ENCODE measurements at regions of chrX and their contacts with region 1.

Region 1: DNA sequence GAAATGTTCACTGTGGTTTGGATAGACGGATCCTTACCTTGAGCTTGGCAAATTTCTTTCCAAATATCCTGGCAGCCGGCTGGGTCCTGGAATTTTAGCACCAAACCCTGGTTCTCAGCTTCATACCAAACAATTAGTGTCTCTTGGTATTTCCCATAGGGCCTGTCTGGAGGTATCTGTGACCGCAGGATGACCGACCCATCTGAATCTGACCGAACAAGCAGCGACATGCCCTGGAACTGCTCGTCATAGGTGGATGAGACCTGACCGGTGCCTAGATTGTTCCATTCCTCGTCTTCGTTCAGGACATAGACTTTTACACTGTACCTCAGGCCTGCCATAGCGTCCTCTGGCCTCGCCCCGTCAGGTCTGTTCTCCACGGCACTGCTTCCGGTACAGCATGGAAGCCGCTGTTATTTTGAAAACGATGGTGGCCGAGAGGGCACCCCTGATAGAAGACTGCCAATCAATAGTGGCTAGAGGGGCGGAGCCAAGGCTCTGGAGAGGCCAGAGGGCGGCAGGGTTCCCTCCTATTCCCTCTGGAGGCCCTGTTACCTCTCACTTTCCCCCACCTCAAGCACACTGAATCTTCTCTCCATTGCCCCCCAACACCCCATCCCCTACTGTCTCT is at the start of gene PPP4R3C:
- DNase-seq: no peak
- H3K4me3 ChIP-seq: no peak within 1 kb of the TSS
- H3K27ac ChIP-seq: no peak within 1 kb of the TSS
- H3K4me1 ChIP-seq: no peaks in the 10 kb centered on the region
- H3K27me3 ChIP-seq: no peaks in the 10 kb centered on the region
- CTCF ChIP-seq: no peak
- total RNA-seq, gene PPP4R3C: not detected

Region 2: DNA sequence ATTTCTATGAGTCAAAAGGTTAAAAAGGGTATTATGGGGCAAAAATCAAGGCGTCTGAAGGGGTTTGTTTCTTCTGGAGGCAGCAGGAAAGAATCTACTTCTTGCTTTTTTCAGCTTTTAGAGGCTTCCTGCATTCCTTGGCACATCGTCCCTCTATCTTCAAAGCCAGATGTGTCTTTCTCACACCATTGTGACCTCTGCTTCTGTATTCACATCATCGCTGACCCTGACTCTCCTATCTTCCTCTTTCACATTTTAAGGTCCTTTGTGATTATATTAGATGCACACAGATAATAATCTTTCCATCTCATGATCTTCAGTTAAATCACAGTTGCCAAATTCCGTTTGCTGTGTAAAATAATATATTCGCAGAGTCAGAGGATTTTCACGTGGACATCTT is 112.6 kb before region 1 on chrX:
- CTCF ChIA-PET with region 1: no interaction called
- dilution Hi-C with region 1: no loop called
- in situ Hi-C with region 1: loop called in 1 of 2 experiments (anchors 25 kb)
- intact Hi-C with region 1: no loop called
- DNase-seq: no peak
- H3K4me3 ChIP-seq: no peak overlapping the region
- H3K27ac ChIP-seq: no peak overlapping the region
- H3K4me1 ChIP-seq: no peaks in the 10 kb centered on the region
- H3K27me3 ChIP-seq: no peaks in the 10 kb centered on the region
- CTCF ChIP-seq: no peak

Region 3: DNA sequence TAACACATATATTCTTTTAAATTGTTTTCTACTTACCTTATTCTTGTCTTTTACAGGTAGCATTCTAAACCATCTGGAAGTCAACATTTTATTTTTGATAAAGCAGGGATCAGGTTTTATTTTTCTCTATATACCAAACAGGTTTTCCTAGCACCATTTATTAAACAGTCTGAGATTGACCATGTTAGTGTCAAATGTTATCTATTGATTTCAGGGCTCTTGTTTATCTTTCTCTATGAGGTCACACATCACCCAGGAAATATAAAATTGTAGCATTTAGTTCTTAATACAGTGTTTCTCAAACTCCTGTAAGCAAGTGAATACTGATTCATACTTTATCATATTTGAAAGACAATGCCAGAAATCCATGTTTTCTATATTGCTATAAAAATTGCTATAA is 28.0 kb before region 1 on chrX:
- CTCF ChIA-PET with region 1: no interaction called
- dilution Hi-C with region 1: no loop called
- in situ Hi-C with region 1: no loop called
- intact Hi-C with region 1: no loop called
- DNase-seq: no peak
- H3K4me3 ChIP-seq: no peak overlapping the region
- H3K27ac ChIP-seq: no peak overlapping the region
- H3K4me1 ChIP-seq: no peaks in the 10 kb centered on the region
- H3K27me3 ChIP-seq: peaks cover 2% of the 10 kb centered on the region
- CTCF ChIP-seq: no peak

Measured in mammary epithelial cell (primary cell).